Natural killer cell (primary cell): ENCODE measurements at regions of chr1 and their contacts with region 1.

Region 1: GRCh38 chr1:94463765-94464330 is 45.7 kb downstream of the ABCD3 start:
- DNase-seq: peak in 1 of 2 donors; percentile 63
- ATAC-seq: peak in 2 of 3 donors; percentile 42 to 44
- H3K4me3 ChIP-seq: no peak overlapping the region
- H3K4me3 Mint-ChIP-seq: no peak overlapping the region
- H3K27ac ChIP-seq: no peak overlapping the region
- H3K27ac Mint-ChIP-seq: peak overlapping the region; percentile 3 to 58
- H3K4me1 ChIP-seq: no peaks in the 10 kb centered on the region
- H3K4me1 Mint-ChIP-seq: peaks cover 4 to 6% of the 10 kb centered on the region in 2 donors
- H3K27me3 ChIP-seq: no peaks in the 10 kb centered on the region
- H3K27me3 Mint-ChIP-seq: no peaks in the 10 kb centered on the region
- CTCF ChIP-seq: peak; percentile 24

Region 2: DNA sequence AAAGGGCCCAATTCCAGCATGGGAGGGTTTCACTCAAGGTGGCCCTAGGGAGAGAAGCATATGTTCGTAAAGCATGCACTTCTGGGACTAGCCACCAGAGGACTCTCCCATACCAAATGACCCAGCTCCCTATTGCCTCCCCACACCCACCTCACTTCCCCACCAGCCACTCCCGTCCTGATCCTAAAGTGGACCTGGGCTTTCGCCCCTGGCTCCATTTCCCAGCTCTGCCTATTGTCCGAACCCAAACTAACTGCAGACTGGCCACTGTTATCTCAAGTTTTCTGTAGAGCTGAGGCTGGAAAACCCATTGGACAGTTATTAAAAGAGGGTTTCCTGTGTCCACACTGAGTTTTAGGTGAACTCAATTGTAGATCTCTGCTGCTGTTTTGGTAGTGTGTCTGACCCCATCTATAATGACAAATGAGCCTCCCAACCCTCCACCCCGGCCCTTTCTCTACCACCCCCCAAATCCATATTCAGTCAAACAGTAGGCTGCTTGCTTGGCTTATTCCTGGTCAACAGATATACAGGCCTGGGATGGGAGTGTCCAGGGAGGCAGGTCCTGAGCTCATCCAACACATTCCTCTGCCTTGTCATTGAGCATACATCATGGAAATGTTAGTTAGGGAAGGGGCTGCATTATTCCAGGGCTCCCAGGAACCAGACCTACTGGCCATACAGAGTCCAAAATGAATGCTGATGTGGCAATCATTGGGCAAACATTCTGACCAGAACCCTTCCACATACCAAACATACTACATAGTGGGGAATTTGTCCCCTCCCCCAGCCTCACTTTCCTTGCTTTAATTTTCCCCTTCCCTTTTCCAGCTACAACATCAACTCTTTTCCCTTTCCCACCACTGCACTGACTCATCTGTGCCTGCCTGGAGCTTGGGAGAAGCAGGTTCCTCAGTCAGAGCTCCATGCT is 402.1 kb before region 1 on chr1:
- intact Hi-C with region 1: loop called (anchors 1 kb)
- DNase-seq: peak in 1 of 2 donors; percentile 55
- ATAC-seq: peak; percentile 54 to 85 (median 64)
- H3K4me3 ChIP-seq: no peak overlapping the region
- H3K4me3 Mint-ChIP-seq: no peak overlapping the region
- H3K27ac ChIP-seq: no peak overlapping the region
- H3K27ac Mint-ChIP-seq: no peak overlapping the region
- H3K4me1 ChIP-seq: no peaks in the 10 kb centered on the region
- H3K4me1 Mint-ChIP-seq: peaks cover 0 to 5% of the 10 kb centered on the region in 2 donors
- H3K27me3 ChIP-seq: no peaks in the 10 kb centered on the region
- H3K27me3 Mint-ChIP-seq: peaks cover 6 to 26% of the 10 kb centered on the region in 2 donors
- CTCF ChIP-seq: peak; percentile 64

Region 3: GRCh38 chr1:94111879-94112278 is 352.0 kb before region 1 on chr1:
- intact Hi-C with region 1: no loop called
- DNase-seq: no peak
- ATAC-seq: no peak
- H3K4me3 ChIP-seq: no peak overlapping the region
- H3K4me3 Mint-ChIP-seq: no peak overlapping the region
- H3K27ac ChIP-seq: no peak overlapping the region
- H3K27ac Mint-ChIP-seq: no peak overlapping the region
- H3K4me1 ChIP-seq: no peaks in the 10 kb centered on the region
- H3K4me1 Mint-ChIP-seq: no peaks in the 10 kb centered on the region
- H3K27me3 ChIP-seq: peaks cover under 1% of the 10 kb centered on the region
- H3K27me3 Mint-ChIP-seq: peaks cover 23 to 44% of the 10 kb centered on the region in 2 donors
- CTCF ChIP-seq: no peak

Region 4: GRCh38 chr1:94773931-94774422 is 310.1 kb after region 1 on chr1:
- intact Hi-C with region 1: no loop called
- DNase-seq: no peak
- ATAC-seq: no peak
- H3K4me3 ChIP-seq: no peak overlapping the region
- H3K4me3 Mint-ChIP-seq: no peak overlapping the region
- H3K27ac ChIP-seq: no peak overlapping the region
- H3K27ac Mint-ChIP-seq: no peak overlapping the region
- H3K4me1 ChIP-seq: no peaks in the 10 kb centered on the region
- H3K4me1 Mint-ChIP-seq: no peaks in the 10 kb centered on the region
- H3K27me3 ChIP-seq: no peaks in the 10 kb centered on the region
- H3K27me3 Mint-ChIP-seq: peaks cover 3 to 9% of the 10 kb centered on the region in 2 donors
- CTCF ChIP-seq: no peak